HepG2 (cell line): ENCODE measurements at regions of chr18 and their contacts with region 1.

Region 1: DNA sequence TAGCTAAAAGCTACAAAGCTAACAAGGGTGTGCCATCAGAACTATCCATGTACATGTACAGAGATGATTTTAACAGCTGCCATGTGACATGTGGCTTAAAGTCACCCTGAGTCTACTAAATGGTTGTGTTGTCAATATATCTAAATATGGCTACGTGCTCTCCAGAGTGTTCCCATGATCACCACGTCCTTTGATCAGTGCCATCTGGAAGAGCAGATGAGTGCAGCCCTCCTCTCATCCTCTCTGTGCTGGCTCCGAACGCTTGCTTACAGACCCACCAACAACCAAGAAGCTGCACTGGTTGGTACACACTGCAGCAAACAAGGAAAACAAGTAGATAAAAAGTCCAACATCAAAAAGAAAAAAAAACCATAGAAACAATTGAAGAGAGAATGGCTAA is 88.6 kb upstream of the NARS1 start:
- DNase-seq: no peak
- ATAC-seq: no peak
- H3K4me3 ChIP-seq: no peak overlapping the region
- H3K27ac ChIP-seq: no peak overlapping the region
- H3K4me1 ChIP-seq: peaks cover 46% of the 10 kb centered on the region
- H3K27me3 ChIP-seq: no peaks in the 10 kb centered on the region
- CTCF ChIP-seq: no peak
- EP300 ChIP-seq: no peak
- POLR2A ChIP-seq: no peak
- RAD21 ChIP-seq: no peak

Region 2: GRCh38 chr18:57630002-57630753 is 80.0 kb before region 1 on chr18:
- CTCF ChIA-PET with region 1: no interaction called
- POLR2A ChIA-PET with region 1: no interaction called
- in situ Hi-C with region 1: no loop called
- intact Hi-C with region 1: loop called (anchors 5 kb)
- DNase-seq: peak; percentile 85
- ATAC-seq: peak; percentile 96
- H3K4me3 ChIP-seq: peak overlapping the region; percentile 60 to 76 (median 69); a peak in 5 of 6 replicates
- H3K27ac ChIP-seq: peak overlapping the region; percentile 37
- H3K4me1 ChIP-seq: peaks cover 38% of the 10 kb centered on the region
- H3K27me3 ChIP-seq: no peaks in the 10 kb centered on the region
- CTCF ChIP-seq: peak; percentile 94
- EP300 ChIP-seq: no peak
- POLR2A ChIP-seq: peak in 1 of 2 experiments; percentile 34; a peak in 1 of 4 replicates
- RAD21 ChIP-seq: peak; percentile 82

Region 3: GRCh38 chr18:57797209-57797651 is 87.0 kb after region 1 on chr18:
- CTCF ChIA-PET with region 1: no interaction called
- POLR2A ChIA-PET with region 1: interaction called, 3 read pairs
- in situ Hi-C with region 1: no loop called
- intact Hi-C with region 1: loop called (anchors 5 kb)
- DNase-seq: peak; percentile 93
- ATAC-seq: peak; percentile 92
- H3K4me3 ChIP-seq: peak overlapping the region in 1 of 3 experiments; percentile 34; a peak in 2 of 6 replicates
- H3K27ac ChIP-seq: peak overlapping the region; percentile 74
- H3K4me1 ChIP-seq: peaks cover 88% of the 10 kb centered on the region
- H3K27me3 ChIP-seq: no peaks in the 10 kb centered on the region; a peak in 1 of 5 replicates
- CTCF ChIP-seq: 0 out of 2 replicates have a peak, but pooled peaks have one; percentile 12
- EP300 ChIP-seq: peak; percentile 69 to 93; a peak in 3 of 4 replicates
- POLR2A ChIP-seq: peak in 1 of 2 experiments; percentile 31; a peak in 1 of 4 replicates
- RAD21 ChIP-seq: peak; percentile 34

Region 4: DNA sequence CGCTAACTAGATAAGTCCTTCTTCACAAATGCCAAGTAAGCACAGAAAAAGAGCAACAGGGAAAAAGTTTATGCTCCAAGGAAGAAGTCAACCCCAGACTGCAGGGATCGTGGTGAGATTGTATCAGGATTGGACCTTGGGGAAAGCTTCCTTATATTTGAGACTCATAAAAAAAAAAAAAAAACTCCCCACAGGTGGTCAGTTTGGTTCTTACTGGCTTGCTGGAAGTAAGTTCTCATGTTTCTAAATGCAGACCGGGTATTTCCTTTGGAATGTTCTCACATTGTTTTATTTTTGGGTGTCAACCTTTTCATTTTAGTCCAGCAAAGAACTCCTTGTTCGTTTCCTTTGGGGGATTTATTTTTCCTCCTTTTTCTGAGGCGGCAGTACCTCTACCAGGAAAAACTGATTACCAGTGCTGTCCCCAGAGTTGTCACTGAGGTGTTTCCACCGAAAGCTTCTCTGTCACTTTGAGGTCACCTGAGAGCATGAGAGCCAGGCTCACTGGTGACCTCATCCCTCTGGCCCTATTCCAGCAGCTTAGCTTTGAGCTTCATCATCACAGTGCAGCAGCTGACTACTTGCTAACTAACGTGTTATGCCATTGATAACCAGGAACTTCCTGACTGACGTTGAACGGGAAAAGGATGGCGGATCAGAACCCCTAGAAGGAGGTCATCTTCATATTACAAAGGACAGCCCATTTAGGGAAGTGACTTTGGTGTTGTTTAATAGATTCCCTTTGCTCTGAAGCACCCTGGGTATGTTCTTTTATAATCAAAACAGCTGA is 109.6 kb after region 1 on chr18:
- CTCF ChIA-PET with region 1: no interaction called
- POLR2A ChIA-PET with region 1: no interaction called
- in situ Hi-C with region 1: no loop called
- intact Hi-C with region 1: loop called (anchors 5 kb)
- DNase-seq: peak; percentile 71
- ATAC-seq: peak; percentile 59
- H3K4me3 ChIP-seq: no peak overlapping the region
- H3K27ac ChIP-seq: no peak overlapping the region
- H3K4me1 ChIP-seq: peaks cover 26% of the 10 kb centered on the region
- H3K27me3 ChIP-seq: no peaks in the 10 kb centered on the region; a peak in 1 of 5 replicates
- CTCF ChIP-seq: no peak
- EP300 ChIP-seq: no peak
- POLR2A ChIP-seq: no peak
- RAD21 ChIP-seq: no peak

Region 5: GRCh38 chr18:57859314-57859713 is 149.1 kb after region 1 on chr18:
- CTCF ChIA-PET with region 1: no interaction called
- POLR2A ChIA-PET with region 1: no interaction called
- in situ Hi-C with region 1: no loop called
- intact Hi-C with region 1: loop called (anchors 5 kb)
- DNase-seq: peak; percentile 44
- ATAC-seq: peak; percentile 94
- H3K4me3 ChIP-seq: no peak overlapping the region
- H3K27ac ChIP-seq: no peak overlapping the region
- H3K4me1 ChIP-seq: no peaks in the 10 kb centered on the region
- H3K27me3 ChIP-seq: no peaks in the 10 kb centered on the region
- CTCF ChIP-seq: peak; percentile 76
- EP300 ChIP-seq: no peak
- POLR2A ChIP-seq: no peak
- RAD21 ChIP-seq: peak; percentile 58